ENCODE measurements at regions of chr17 and their contacts with region 1.

Region 1: GRCh38 chr17:40303009-40303657 is 5.8 kb upstream of the RARA start:
- DNase-seq: no peak
- ATAC-seq: peak; percentile 48 to 62
- H3K4me3 ChIP-seq: no peak overlapping the region
- H3K27ac ChIP-seq: no peak overlapping the region
- H3K4me1 ChIP-seq: peaks cover 10% of the 10 kb centered on the region
- H3K27me3 ChIP-seq: no peaks in the 10 kb centered on the region

Region 2: GRCh38 chr17:40068917-40069750 is 234.0 kb before region 1 on chr17:
- intact Hi-C with region 1: no loop called
- DNase-seq: peak; percentile 91 to 98 (median 97)
- ATAC-seq: peak; percentile 59 to 60
- H3K4me3 ChIP-seq: peak overlapping the region; percentile 13
- H3K27ac ChIP-seq: peak overlapping the region; percentile 95
- H3K4me1 ChIP-seq: peaks cover 55% of the 10 kb centered on the region
- H3K27me3 ChIP-seq: no peaks in the 10 kb centered on the region

Region 3: GRCh38 chr17:40251576-40251975 is 51.6 kb before region 1 on chr17:
- intact Hi-C with region 1: no loop called
- DNase-seq: no peak
- ATAC-seq: peak; percentile 63 to 90
- H3K4me3 ChIP-seq: no peak overlapping the region
- H3K27ac ChIP-seq: no peak overlapping the region
- H3K4me1 ChIP-seq: no peaks in the 10 kb centered on the region
- H3K27me3 ChIP-seq: no peaks in the 10 kb centered on the region

Region 4: GRCh38 chr17:40345161-40345993 is 42.2 kb after region 1 on chr17:
- intact Hi-C with region 1: loop called in 1 of 4 experiments (anchors 2 kb)
- DNase-seq: peak; percentile 89 to 95 (median 95)
- ATAC-seq: peak; percentile 38 to 46
- H3K4me3 ChIP-seq: peak overlapping the region; percentile 89
- H3K27ac ChIP-seq: peak overlapping the region; percentile 89
- H3K4me1 ChIP-seq: peaks cover 40% of the 10 kb centered on the region
- H3K27me3 ChIP-seq: no peaks in the 10 kb centered on the region

Region 5: GRCh38 chr17:40355123-40355803 is 52.1 kb after region 1 on chr17:
- intact Hi-C with region 1: loop called (anchors 2 to 5 kb)
- DNase-seq: peak; percentile 77 to 93 (median 92)
- ATAC-seq: peak; percentile 60
- H3K4me3 ChIP-seq: no peak overlapping the region
- H3K27ac ChIP-seq: no peak overlapping the region
- H3K4me1 ChIP-seq: peaks cover 1% of the 10 kb centered on the region
- H3K27me3 ChIP-seq: no peaks in the 10 kb centered on the region

Region 6: DNA sequence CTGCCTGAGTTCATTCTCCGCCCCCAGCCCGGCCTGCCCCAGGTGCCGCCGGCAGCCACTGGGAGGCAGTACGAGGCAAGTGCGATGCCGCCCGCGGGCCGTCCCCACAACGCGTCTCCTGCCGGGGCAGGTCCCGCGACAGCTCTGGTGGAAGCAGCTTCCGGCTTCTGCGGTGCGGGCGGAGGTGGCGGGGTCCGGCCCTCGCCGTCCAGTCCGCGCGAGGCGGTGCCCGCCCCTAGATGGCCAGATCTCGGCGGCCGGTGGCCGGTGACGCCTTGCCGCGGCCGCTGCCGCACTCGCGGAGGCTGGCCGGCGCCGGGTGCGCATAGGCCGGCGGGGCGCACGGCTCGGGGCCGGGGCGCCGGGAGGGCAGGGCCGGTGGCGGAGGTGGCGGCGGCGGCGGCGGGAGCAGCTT is 59.6 kb after region 1 on chr17:
- intact Hi-C with region 1: loop called in 2 of 4 experiments (anchors 2 to 5 kb)
- DNase-seq: peak; percentile 76 to 87 (median 86)
- ATAC-seq: peak; percentile 18 to 56
- H3K4me3 ChIP-seq: peak overlapping the region; percentile 47
- H3K27ac ChIP-seq: no peak overlapping the region
- H3K4me1 ChIP-seq: no peaks in the 10 kb centered on the region
- H3K27me3 ChIP-seq: no peaks in the 10 kb centered on the region

Region 7: GRCh38 chr17:40399185-40399584 is 96.1 kb after region 1 on chr17:
- intact Hi-C with region 1: loop called in 1 of 4 experiments (anchors 10 kb)
- DNase-seq: no peak
- ATAC-seq: peak in 1 of 2 donors; percentile 55
- H3K4me3 ChIP-seq: no peak overlapping the region
- H3K27ac ChIP-seq: no peak overlapping the region
- H3K4me1 ChIP-seq: no peaks in the 10 kb centered on the region
- H3K27me3 ChIP-seq: no peaks in the 10 kb centered on the region

Region 8: GRCh38 chr17:40417609-40418427 is 114.7 kb after region 1 on chr17 and contains the start of gene TOP2A:
- intact Hi-C with region 1: loop called in 1 of 4 experiments (anchors 10 kb)
- DNase-seq: peak; percentile 93 to 95 (median 93)
- ATAC-seq: peak; percentile 100
- H3K4me3 ChIP-seq: peak within 1 kb of the TSS; percentile 50
- H3K27ac ChIP-seq: peak within 1 kb of the TSS; percentile 13
- H3K4me1 ChIP-seq: no peaks in the 10 kb centered on the region
- H3K27me3 ChIP-seq: no peaks in the 10 kb centered on the region
- total RNA-seq, gene TOP2A: 0.22 to 5.9 (median 3.2) TPM